HEK293 (cell line): ENCODE measurements at regions of chr12 and their contacts with region 1.

Region 1: GRCh38 chr12:8038659-8039114 is 6.2 kb downstream of the FOXJ2 start:
- H3K4me3 ChIP-seq: peak overlapping the region; percentile 18
- H3K27ac ChIP-seq: no peak overlapping the region; the same call in 1 of the 2 replicates
- H3K4me1 ChIP-seq: peaks cover 11% of the 10 kb centered on the region
- CTCF ChIP-seq: no peak

Region 2: DNA sequence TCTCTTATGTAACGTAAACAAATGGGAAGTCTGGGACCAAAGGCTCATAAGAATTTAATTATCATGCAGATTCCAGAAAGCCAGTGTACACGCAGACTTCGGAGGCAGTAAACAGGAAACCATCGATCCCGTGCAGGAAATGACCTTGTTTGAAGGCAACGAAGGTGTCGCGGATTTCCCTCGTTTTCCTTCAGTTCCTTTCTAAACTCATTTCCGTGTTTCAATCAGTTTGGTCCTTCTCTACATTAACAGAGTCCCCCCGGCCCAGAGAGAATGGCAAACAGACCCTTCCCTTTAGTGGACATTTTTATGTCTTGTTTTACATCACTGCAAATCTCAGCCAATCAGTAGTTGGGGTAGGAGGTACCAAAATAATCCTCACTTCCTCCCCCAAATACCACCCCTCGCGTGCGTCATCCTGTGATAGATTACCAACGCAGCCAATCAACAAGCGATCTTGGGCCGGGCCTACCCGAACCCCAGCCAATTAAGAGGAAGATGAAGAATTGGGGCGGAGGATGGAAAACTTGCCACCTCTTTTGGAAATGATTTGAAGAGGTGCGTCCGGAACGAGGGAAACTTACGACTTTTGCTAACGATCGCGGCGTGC is 12.3 kb before region 1 on chr12:
- CTCF ChIA-PET with region 1: interaction called, 5 read pairs
- POLR2A ChIA-PET with region 1: interaction called, 12 read pairs
- H3K4me3 ChIP-seq: peak overlapping the region; percentile 55
- H3K27ac ChIP-seq: peak overlapping the region; percentile 98
- H3K4me1 ChIP-seq: no peaks in the 10 kb centered on the region; the same call in 1 of the 2 replicates
- CTCF ChIP-seq: no peak